Transverse colon (tissue), 4 donors: ENCODE measurements at regions of chr10 and their contacts with region 1.

Region 1: GRCh38 chr10:68988530-68989316 is at the start of gene KIFBP:
- DNase-seq: peak; percentile 94
- H3K4me3 ChIP-seq: peak within 1 kb of the TSS; percentile 68 to 89 (median 74)
- H3K27ac ChIP-seq: peak within 1 kb of the TSS; percentile 88 to 93 (median 89)
- H3K4me1 ChIP-seq: peaks cover 5 to 45% (median 33%) of the 10 kb centered on the region in 4 donors
- H3K27me3 ChIP-seq: no peaks in the 10 kb centered on the region
- CTCF ChIP-seq: peak in 4 of 5 experiments; percentile 20 to 47 (median 36)
- EP300 ChIP-seq: no peak
- POLR2A ChIP-seq: peak; percentile 93
- total RNA-seq, gene KIFBP: 20.2 to 31.2 (median 22.6) TPM

Region 2: GRCh38 chr10:69004821-69005220 is 16.1 kb after region 1 on chr10:
- in situ Hi-C with region 1: no loop called
- intact Hi-C with region 1: no loop called
- DNase-seq: no peak
- H3K4me3 ChIP-seq: no peak overlapping the region
- H3K27ac ChIP-seq: no peak overlapping the region
- H3K4me1 ChIP-seq: peaks cover 0 to 8% (median 0%) of the 10 kb centered on the region in 4 donors
- H3K27me3 ChIP-seq: no peaks in the 10 kb centered on the region
- CTCF ChIP-seq: peak; percentile 26 to 41 (median 36)
- EP300 ChIP-seq: no peak
- POLR2A ChIP-seq: no peak

Region 3: DNA sequence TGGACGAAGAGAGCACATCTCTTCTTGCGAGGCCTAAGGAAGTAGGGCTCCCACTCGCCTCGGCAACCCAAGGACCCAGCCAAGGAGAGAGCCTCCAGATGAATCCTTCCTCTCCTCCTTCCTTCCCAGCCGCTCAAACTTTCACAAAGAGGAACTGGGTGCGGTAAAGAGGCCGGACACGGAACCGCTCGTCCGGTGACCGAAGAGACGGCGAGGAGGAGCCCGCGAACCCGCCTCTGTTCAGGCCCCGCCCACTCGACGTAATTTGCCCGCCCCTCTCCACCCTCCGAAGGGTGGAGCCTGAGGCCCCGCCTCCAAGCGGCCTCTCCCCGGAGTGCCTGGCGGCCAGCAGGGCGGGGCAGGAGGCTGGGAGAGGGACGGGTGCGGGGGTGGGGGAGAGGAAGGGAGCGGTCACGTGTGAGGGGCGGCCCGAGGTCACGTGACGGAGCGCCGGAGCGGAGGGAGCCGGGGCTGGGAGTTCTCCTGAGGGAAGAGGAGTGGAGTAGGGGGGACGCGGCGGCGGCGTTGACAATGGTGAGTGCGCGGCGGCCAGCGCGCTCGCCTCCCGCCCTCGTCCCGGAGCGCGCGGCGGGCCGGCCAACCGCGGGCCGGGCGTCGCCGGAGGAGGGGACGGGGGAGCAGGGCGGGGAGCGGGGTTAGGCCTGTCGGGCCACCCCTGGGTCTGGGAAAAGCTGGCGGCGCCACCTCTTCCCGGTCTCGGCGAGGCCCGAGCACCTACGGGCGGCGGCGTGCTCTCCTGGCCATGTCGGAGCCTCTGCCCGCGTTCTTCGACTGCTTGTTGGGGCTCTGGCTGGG is 135.2 kb after region 1 on chr10 and contains the start of gene VPS26A:
- in situ Hi-C with region 1: loop called in 2 of 4 experiments (anchors 10 to 25 kb)
- intact Hi-C with region 1: no loop called
- DNase-seq: peak; percentile 99
- H3K4me3 ChIP-seq: peak within 1 kb of the TSS; percentile 74 to 98 (median 85)
- H3K27ac ChIP-seq: peak within 1 kb of the TSS; percentile 90 to 99 (median 93)
- H3K4me1 ChIP-seq: peaks cover 0 to 26% (median 15%) of the 10 kb centered on the region in 4 donors
- H3K27me3 ChIP-seq: no peaks in the 10 kb centered on the region
- CTCF ChIP-seq: peak in 1 of 5 experiments; percentile 27
- EP300 ChIP-seq: no peak
- POLR2A ChIP-seq: peak; percentile 98
- total RNA-seq, gene VPS26A: 5.4 to 38.7 (median 23.2) TPM

Region 4: DNA sequence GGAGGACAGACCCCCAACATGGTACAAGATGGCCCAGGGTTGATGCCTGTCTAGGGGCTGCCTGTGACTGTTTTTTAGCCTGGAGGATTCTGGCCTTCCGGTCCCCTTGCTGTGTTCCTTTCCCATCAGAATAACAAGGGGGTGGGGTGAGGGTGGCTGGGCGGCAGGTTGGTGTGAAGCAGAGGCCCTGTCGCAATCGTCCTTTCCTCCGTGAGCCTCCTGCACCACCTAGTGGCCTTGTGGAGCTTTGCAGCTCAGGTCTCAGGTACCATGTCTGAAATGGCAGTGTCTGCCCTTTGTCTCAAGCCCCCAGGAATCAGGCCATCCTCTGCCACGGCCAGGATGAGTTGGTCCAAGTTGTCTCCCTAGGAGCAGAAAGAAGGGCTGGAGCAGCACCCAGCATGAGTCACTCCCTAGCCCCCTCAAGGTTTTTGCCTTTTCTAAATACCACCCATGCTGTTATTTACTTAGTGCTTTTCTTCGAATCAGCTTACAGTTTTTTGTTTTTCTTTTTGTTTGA is 403.8 kb after region 1 on chr10:
- in situ Hi-C with region 1: loop called in 3 of 4 experiments (anchors 25 kb)
- intact Hi-C with region 1: no loop called
- DNase-seq: peak; percentile 88
- H3K4me3 ChIP-seq: no peak overlapping the region
- H3K27ac ChIP-seq: peak overlapping the region in 1 of 4 donors; percentile 17
- H3K4me1 ChIP-seq: peaks cover 0 to 3% (median 0%) of the 10 kb centered on the region in 4 donors
- H3K27me3 ChIP-seq: no peaks in the 10 kb centered on the region
- CTCF ChIP-seq: peak; percentile 94 to 98 (median 96)
- EP300 ChIP-seq: no peak
- POLR2A ChIP-seq: no peak

Region 5: GRCh38 chr10:69474742-69475432 is 486.2 kb after region 1 on chr10:
- in situ Hi-C with region 1: no loop called
- intact Hi-C with region 1: no loop called
- DNase-seq: no peak
- H3K4me3 ChIP-seq: no peak overlapping the region
- H3K27ac ChIP-seq: peak overlapping the region; percentile 81 to 91 (median 87)
- H3K4me1 ChIP-seq: peaks cover 40 to 86% (median 48%) of the 10 kb centered on the region in 4 donors
- H3K27me3 ChIP-seq: no peaks in the 10 kb centered on the region
- CTCF ChIP-seq: no peak
- EP300 ChIP-seq: no peak
- POLR2A ChIP-seq: no peak

Region 6: DNA sequence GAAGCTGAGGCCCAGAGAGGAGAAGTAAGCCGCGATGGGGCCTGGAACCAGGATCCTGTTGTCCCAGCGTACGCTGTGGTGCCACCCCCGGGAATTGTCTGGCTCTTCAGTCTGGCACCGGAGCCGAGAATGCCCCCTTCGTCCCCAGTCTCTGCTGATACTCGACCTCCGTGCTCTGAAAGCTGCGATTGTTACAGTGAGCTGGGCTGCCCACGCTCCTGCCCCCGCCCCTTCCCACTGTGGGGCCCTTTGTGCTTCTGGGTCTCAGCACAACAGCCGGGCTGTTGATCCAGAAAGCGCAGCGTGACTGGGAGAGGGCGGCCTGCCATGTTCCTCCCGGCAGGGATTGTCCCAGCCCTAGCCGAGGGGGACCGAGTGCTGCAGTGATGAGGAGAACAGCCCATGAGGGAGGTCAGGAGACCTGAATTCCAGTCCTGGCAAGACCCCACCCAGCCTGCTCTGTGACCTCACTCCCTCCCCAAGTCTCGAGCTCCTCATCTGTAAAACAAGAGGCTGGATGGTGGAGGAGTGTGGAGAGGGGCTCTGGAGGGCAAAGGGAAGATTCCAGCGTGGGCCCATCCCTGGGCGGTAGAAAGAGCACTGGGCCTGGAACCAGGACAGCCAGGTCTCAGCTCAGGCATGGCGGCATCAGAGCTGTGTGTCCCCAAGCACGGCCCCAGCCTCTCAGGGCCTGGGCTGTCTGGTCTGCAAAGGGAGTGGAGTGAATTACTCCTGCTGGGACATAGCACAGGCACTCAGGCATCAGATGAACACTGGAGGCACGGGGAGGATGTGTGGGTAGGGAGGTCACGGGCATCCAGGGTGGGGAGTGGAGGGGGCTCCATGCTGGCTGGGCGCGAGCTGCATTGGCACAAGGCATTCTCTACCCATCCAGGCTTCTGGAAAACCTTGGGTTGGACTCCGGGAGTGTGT is 506.2 kb after region 1 on chr10:
- in situ Hi-C with region 1: no loop called
- intact Hi-C with region 1: no loop called
- DNase-seq: no peak
- H3K4me3 ChIP-seq: no peak overlapping the region
- H3K27ac ChIP-seq: peak overlapping the region; percentile 53 to 79 (median 75)
- H3K4me1 ChIP-seq: peaks cover 5 to 29% (median 16%) of the 10 kb centered on the region in 4 donors
- H3K27me3 ChIP-seq: no peaks in the 10 kb centered on the region
- CTCF ChIP-seq: no peak
- EP300 ChIP-seq: no peak
- POLR2A ChIP-seq: no peak